Esophagus muscularis mucosa (tissue), 4 donors: ENCODE measurements at regions of chr12 and their contacts with region 1.

Region 1: GRCh38 chr12:26629864-26630263 is 203.1 kb downstream of the ITPR2 start:
- DNase-seq: no peak
- H3K4me3 ChIP-seq: peak overlapping the region; percentile 10 to 24 (median 20)
- H3K27ac ChIP-seq: peak overlapping the region; percentile 60 to 75 (median 73)
- H3K4me1 ChIP-seq: peaks cover 6 to 58% (median 58%) of the 10 kb centered on the region in 4 donors
- H3K27me3 ChIP-seq: no peaks in the 10 kb centered on the region
- CTCF ChIP-seq: peak; percentile 53 to 70 (median 61)
- EP300 ChIP-seq: no peak
- POLR2A ChIP-seq: no peak

Region 2: GRCh38 chr12:26113853-26114719 is 515.8 kb before region 1 on chr12:
- intact Hi-C with region 1: loop called (anchors 5 kb)
- DNase-seq: peak; percentile 98
- H3K4me3 ChIP-seq: peak overlapping the region; percentile 54 to 65 (median 58)
- H3K27ac ChIP-seq: peak overlapping the region; percentile 89 to 97 (median 94)
- H3K4me1 ChIP-seq: peaks cover 27 to 62% (median 57%) of the 10 kb centered on the region in 4 donors
- H3K27me3 ChIP-seq: no peaks in the 10 kb centered on the region
- CTCF ChIP-seq: peak in 2 of 3 experiments; percentile 23 to 41
- EP300 ChIP-seq: no peak
- POLR2A ChIP-seq: peak; percentile 31

Region 3: GRCh38 chr12:26651566-26652188 is 21.8 kb after region 1 on chr12:
- intact Hi-C with region 1: loop called (anchors 1 kb)
- DNase-seq: no peak
- H3K4me3 ChIP-seq: no peak overlapping the region
- H3K27ac ChIP-seq: peak overlapping the region in 3 of 4 donors; percentile 5 to 52 (median 28)
- H3K4me1 ChIP-seq: peaks cover 0 to 33% (median 20%) of the 10 kb centered on the region in 4 donors
- H3K27me3 ChIP-seq: no peaks in the 10 kb centered on the region
- CTCF ChIP-seq: peak; percentile 79 to 84 (median 82)
- EP300 ChIP-seq: no peak
- POLR2A ChIP-seq: no peak

Region 4: GRCh38 chr12:26918309-26919215 is 288.7 kb after region 1 on chr12:
- intact Hi-C with region 1: no loop called
- DNase-seq: no peak
- H3K4me3 ChIP-seq: no peak overlapping the region
- H3K27ac ChIP-seq: no peak overlapping the region
- H3K4me1 ChIP-seq: no peaks in the 10 kb centered on the region
- H3K27me3 ChIP-seq: no peaks in the 10 kb centered on the region
- CTCF ChIP-seq: peak; percentile 18 to 35 (median 24)
- EP300 ChIP-seq: no peak
- POLR2A ChIP-seq: no peak

Region 5: GRCh38 chr12:27179400-27180214 is 549.7 kb after region 1 on chr12:
- intact Hi-C with region 1: loop called (anchors 10 kb)
- DNase-seq: no peak
- H3K4me3 ChIP-seq: no peak overlapping the region
- H3K27ac ChIP-seq: peak overlapping the region; percentile 71 to 80 (median 74)
- H3K4me1 ChIP-seq: peaks cover 16 to 52% (median 32%) of the 10 kb centered on the region in 4 donors
- H3K27me3 ChIP-seq: no peaks in the 10 kb centered on the region
- CTCF ChIP-seq: no peak
- EP300 ChIP-seq: no peak
- POLR2A ChIP-seq: no peak